AG04450 (cell line): ENCODE measurements at regions of chr11 and their contacts with region 1.

Region 1: DNA sequence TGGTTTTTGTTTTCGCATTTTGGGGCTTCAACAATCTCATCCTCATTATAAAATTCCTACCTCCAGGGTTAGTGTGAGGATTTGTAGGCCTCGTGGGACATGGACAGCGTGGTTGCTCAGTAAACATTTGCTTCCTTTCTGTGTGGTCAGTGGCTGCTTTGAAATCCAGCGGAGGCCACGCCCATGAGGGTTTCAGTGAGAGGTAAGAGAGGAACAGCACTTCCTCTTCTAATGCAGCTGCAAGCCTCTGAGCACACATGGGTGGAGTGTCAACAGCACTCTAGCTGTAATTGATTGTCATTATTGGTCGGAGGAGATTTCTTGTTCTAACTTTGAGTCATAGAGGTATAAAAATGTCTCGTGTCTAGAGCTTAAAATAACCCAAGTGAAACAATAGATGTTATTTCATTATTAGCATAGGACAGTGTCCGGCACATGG is 6.0 kb upstream of the ARHGAP42 start:
- DNase-seq: no peak
- H3K4me3 ChIP-seq: no peak overlapping the region
- H3K27ac ChIP-seq: no peak overlapping the region
- H3K27me3 ChIP-seq: no peaks in the 10 kb centered on the region
- CTCF ChIP-seq: no peak

Region 2: DNA sequence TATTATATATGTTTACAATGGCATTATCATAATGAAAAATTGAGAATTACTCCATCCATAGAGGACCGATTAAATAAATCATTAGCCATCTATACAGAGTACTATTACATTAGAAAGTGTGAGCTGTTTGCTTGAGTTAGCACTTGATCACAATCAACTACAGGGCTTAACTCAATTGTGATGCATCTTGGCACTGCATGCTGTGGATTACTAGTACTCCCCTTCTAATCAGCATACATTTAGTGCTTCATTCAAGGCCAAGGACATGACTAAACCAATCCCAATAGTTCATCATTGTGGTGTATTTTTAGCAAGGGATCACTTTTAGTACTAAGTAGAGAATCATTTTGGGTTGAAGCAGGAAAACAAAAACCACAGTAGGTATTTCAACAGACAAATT is 17.5 kb before region 1 on chr11:
- CTCF ChIA-PET with region 1: interaction called, 12 read pairs
- POLR2A ChIA-PET with region 1: no interaction called
- DNase-seq: no peak
- H3K4me3 ChIP-seq: no peak overlapping the region
- H3K27ac ChIP-seq: no peak overlapping the region
- H3K27me3 ChIP-seq: no peaks in the 10 kb centered on the region
- CTCF ChIP-seq: no peak

Region 3: GRCh38 chr11:100849009-100849900 is 168.2 kb after region 1 on chr11:
- CTCF ChIA-PET with region 1: interaction called, 36 read pairs
- POLR2A ChIA-PET with region 1: no interaction called
- DNase-seq: peak; percentile 72
- H3K4me3 ChIP-seq: no peak overlapping the region
- H3K27ac ChIP-seq: no peak overlapping the region
- H3K27me3 ChIP-seq: no peaks in the 10 kb centered on the region
- CTCF ChIP-seq: no peak

Region 4: GRCh38 chr11:100855466-100856067 is 174.5 kb after region 1 on chr11:
- CTCF ChIA-PET with region 1: interaction called, 36 read pairs
- POLR2A ChIA-PET with region 1: no interaction called
- DNase-seq: no peak
- H3K4me3 ChIP-seq: no peak overlapping the region
- H3K27ac ChIP-seq: no peak overlapping the region
- H3K27me3 ChIP-seq: no peaks in the 10 kb centered on the region
- CTCF ChIP-seq: peak; percentile 64